Panc1 (cell line): ENCODE measurements at regions of chr2 and their contacts with region 1.

Region 1: GRCh38 chr2:68244456-68244855 is 7.9 kb downstream of the PPP3R1 start:
- DNase-seq: no peak
- ATAC-seq: no peak
- H3K4me3 ChIP-seq: no peak overlapping the region
- H3K27ac ChIP-seq: no peak overlapping the region
- H3K4me1 ChIP-seq: peaks cover 34% of the 10 kb centered on the region
- H3K27me3 ChIP-seq: no peaks in the 10 kb centered on the region
- CTCF ChIP-seq: peak; percentile 21; the same call in 1 of the 2 replicates

Region 2: DNA sequence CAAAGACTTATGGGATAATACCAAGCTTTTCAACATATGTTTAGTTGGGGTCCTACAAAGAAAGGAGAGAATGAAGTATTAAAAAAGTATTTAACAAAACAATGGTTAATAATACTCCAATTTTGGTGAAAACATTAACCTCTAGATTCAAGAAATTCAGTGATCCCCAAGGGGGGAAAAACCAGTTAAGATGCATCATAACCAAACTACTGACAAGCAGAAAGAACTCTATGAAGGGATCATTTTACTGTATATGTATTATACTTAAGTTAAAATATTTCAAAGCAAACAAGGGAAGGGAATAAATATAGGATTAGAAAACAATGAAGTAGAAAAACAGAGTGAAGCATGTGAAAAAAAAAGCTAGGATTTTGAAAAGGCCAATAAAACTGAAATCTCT is 66.6 kb after region 1 on chr2:
- CTCF ChIA-PET with region 1: no interaction called
- POLR2A ChIA-PET with region 1: interaction called, 18 read pairs
- in situ Hi-C with region 1: no loop called
- intact Hi-C with region 1: no loop called
- DNase-seq: no peak
- ATAC-seq: no peak
- H3K4me3 ChIP-seq: no peak overlapping the region
- H3K27ac ChIP-seq: no peak overlapping the region
- H3K4me1 ChIP-seq: no peaks in the 10 kb centered on the region
- H3K27me3 ChIP-seq: peaks cover 4% of the 10 kb centered on the region
- CTCF ChIP-seq: no peak

Region 3: DNA sequence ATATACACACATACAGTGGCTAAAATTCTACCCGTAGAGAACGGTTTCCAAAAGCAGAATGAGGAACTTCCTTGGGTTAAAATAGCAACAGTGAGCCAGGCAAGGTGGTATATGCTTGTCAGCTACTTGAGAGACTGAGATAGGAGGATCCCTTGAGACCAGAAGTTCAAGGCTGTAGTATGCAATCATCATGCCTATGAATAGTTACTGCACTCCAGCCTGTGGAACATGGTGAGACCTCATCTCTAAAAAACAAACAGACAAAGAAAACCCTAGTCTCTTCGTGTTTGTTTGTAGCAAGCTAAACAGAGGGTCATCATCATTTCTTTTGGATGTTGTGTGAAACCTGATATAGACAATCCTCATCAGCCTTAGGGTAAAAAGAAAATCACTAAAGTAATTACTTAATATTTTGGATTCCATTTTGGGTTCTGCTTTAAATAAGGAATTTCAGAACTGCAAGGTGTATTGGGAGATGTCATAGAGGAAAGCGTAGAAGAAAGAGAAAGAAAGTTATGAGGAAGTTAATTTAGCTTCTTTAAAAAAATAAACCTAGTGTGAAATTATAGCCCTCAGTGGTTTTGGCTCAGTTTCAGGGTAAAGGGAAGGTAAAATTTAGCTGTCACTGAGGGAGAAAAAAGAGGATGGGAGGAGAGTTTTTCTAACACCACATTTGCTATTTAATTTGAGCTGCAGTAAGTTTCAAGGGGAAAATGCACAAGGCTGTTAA is 167.1 kb after region 1 on chr2:
- CTCF ChIA-PET with region 1: no interaction called
- POLR2A ChIA-PET with region 1: no interaction called
- in situ Hi-C with region 1: no loop called
- intact Hi-C with region 1: no loop called
- DNase-seq: no peak
- ATAC-seq: no peak
- H3K4me3 ChIP-seq: no peak overlapping the region
- H3K27ac ChIP-seq: no peak overlapping the region
- H3K4me1 ChIP-seq: no peaks in the 10 kb centered on the region
- H3K27me3 ChIP-seq: 0 out of 2 replicates have a peak, but pooled peaks cover 2% of the 10 kb centered on the region
- CTCF ChIP-seq: no peak